Endothelial cell of umbilical vein (primary cell): ENCODE measurements at regions of chr18 and their contacts with region 1.

Region 1: DNA sequence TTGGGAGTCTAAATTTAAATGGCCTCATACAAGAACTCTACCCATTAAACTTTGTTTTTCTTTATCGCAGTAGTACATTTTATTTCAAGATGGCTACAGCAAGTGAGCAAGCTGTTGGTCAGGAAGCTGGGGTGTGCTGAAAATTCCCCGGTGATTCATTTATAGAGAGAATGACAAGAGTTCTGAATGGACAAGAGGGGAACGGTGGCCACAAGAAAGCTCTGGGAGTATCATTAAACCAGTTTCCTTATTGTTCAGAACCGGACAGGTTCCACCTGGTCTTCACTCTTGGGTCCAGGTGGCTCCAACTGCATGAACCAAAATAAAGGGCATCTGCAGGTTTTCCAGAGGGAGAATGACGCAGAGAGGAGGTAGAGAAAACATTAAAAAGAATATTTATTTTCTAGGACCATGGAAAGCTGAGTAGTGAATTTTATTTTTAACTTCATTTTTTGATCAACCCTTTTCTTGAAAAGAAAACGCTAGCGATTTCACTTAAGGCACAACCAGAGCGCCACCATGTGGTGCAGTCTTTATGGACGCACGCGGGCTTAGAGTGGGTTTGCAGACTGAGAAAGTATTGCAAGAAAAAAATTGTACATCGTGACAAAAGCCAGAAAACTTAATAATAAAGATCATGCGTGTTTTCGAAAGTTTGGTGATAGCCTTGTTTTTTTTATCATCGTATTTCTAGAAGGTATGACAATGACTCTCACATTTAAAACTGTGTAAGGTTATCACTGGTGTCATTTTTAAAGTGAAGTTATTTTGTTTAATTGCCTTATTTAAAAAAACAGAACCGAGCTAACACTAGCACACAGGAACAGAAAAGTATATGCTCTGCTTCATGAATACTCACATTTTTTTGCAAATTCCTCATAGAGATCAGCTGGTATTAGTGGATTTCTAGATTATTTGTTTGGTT is 97.9 kb upstream of the NOL4 start:
- DNase-seq: peak; percentile 65
- H3K4me3 ChIP-seq: no peak overlapping the region
- H3K27ac ChIP-seq: no peak overlapping the region
- H3K4me1 ChIP-seq: no peaks in the 10 kb centered on the region
- H3K27me3 ChIP-seq: peaks cover 0 to 5% of the 10 kb centered on the region in 2 experiments
- CTCF ChIP-seq: peak; percentile 66 to 71
- POLR2A ChIP-seq: no peak

Region 2: DNA sequence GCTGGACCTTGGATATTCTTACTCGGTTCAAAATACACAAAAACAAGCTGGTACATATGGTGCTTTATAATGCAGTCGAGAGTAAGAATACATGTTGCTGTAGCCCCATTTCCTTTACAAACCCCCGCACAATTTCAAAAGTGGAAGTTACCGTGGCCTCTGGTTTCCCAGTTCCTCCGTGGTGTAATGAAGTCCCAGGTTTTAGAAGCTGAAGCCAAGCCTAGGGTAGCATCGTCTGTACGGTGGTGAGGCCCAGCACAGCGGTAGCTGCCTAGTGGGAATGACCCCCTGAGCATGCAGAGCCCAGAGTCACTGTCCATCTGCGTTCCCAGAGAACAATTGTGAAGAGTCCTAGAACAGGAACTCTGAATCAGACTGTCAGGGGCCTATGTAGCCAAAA is 572.8 kb before region 1 on chr18:
- CTCF ChIA-PET with region 1: no interaction called
- POLR2A ChIA-PET with region 1: no interaction called
- dilution Hi-C with region 1: no loop called
- intact Hi-C with region 1: loop called (anchors 2 kb)
- DNase-seq: no peak
- H3K4me3 ChIP-seq: no peak overlapping the region
- H3K27ac ChIP-seq: no peak overlapping the region
- H3K4me1 ChIP-seq: no peaks in the 10 kb centered on the region
- H3K27me3 ChIP-seq: no peaks in the 10 kb centered on the region
- CTCF ChIP-seq: no peak
- POLR2A ChIP-seq: no peak

Region 3: GRCh38 chr18:33839441-33840211 is 483.0 kb before region 1 on chr18:
- CTCF ChIA-PET with region 1: interaction called, 15 read pairs
- POLR2A ChIA-PET with region 1: no interaction called
- dilution Hi-C with region 1: no loop called
- intact Hi-C with region 1: loop called (anchors 1 kb)
- DNase-seq: peak; percentile 59
- H3K4me3 ChIP-seq: no peak overlapping the region
- H3K27ac ChIP-seq: no peak overlapping the region
- H3K4me1 ChIP-seq: no peaks in the 10 kb centered on the region
- H3K27me3 ChIP-seq: peaks cover 0 to 2% of the 10 kb centered on the region in 2 experiments
- CTCF ChIP-seq: peak; percentile 42 to 66
- POLR2A ChIP-seq: no peak